Dendritic cell treated with granulocyte-macrophage colony-stimulating factor and Interleukin-4, amounts not matched to agents 40 ng/mL and 50 ng/mL, for 4 days (primary cell): ENCODE measurements at regions of chr2 and their contacts with region 1.

Region 1: GRCh38 chr2:199739413-199740110 is 111.4 kb downstream of the FTCDNL1 start:
- H3K4me3 Mint-ChIP-seq: peak overlapping the region; percentile 42
- H3K27ac Mint-ChIP-seq: peak overlapping the region; percentile 52
- H3K4me1 Mint-ChIP-seq: peaks cover 18% of the 10 kb centered on the region
- H3K27me3 Mint-ChIP-seq: no peaks in the 10 kb centered on the region

Region 2: DNA sequence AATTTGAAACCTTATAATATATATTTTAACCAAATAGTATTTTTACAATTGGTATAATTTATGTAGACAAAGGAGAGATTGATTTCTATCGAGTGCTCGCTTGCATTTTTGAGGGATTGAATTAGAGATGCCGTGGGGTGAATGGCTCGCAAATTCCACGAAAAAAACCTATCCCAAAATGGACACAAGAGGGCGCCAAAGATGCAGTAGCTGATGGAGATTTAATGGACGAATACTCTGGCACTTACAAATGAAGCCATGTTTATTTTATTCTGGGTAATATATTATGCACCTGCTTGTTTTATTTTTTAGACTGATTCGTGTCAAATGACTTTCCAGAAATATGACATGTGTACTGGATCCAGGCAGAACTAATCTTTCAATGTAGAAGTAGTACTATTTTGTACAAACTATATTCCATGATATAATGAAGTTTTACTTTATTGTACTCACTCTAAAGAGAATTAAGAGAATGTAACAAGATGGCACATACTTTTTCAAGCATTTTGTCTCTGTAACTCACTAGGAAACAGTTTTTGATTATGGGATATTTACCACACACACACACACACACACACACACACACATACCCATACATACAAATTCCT is 1429.8 kb before region 1 on chr2:
- intact Hi-C with region 1: loop called (anchors 5 kb)
- H3K4me3 Mint-ChIP-seq: no peak overlapping the region
- H3K27ac Mint-ChIP-seq: no peak overlapping the region
- H3K4me1 Mint-ChIP-seq: no peaks in the 10 kb centered on the region
- H3K27me3 Mint-ChIP-seq: peaks cover 17% of the 10 kb centered on the region

Region 3: GRCh38 chr2:199861132-199861774 is 121.7 kb after region 1 on chr2:
- intact Hi-C with region 1: loop called (anchors 10 kb)
- H3K4me3 Mint-ChIP-seq: no peak overlapping the region
- H3K27ac Mint-ChIP-seq: no peak overlapping the region
- H3K4me1 Mint-ChIP-seq: no peaks in the 10 kb centered on the region
- H3K27me3 Mint-ChIP-seq: no peaks in the 10 kb centered on the region